CD4-positive, alpha-beta memory T cell (primary cell): ENCODE measurements at regions of chr22 and their contacts with region 1.

Region 1: DNA sequence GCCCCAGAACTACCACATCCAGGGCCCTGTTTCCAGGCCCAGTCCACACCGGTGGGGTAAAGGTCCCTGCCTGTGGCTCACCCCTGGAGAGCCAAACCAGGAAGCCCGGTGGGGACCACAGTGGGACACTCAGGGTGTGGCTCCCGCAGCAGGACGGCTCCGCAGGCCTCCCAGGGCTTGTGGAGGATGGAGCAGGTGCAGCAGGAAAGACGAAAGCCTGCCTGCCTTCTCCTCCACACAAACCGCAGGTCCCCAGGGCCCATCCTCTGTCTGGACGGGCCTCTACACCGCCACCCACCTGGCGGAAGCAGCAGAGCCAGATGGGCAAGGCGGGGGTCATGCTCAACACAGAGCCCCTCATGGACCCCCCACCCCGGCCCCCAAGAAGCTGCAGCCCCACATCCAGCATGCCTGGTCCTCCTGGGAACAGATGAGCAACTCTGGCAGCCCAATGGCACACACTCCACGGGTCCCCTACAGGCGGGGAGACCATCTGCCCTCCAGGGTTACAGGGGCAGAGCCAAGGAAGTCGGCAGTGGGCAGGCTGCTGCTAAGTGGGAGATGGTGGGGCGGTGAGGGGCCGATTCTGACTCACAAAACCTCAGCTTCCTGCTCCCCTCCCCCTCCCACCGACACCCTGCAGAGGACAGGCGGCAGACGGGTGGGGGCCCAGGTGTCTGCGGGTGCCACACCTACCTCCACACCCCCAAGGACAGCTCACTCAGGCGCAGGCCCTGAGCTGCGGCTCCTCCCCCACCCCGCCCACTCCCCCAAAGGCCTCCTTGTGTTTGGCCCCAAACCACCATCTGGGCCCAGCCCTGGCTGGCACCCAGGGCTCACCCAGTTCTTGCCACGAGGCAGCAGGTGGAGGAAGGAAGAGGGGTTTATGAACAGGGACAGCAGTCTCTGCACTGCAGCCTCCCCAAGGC is 5.2 kb downstream of the SBF1 start:
- DNase-seq: peak; percentile 96 to 99 (median 97)
- H3K4me3 ChIP-seq: peak overlapping the region; percentile 42 to 51
- H3K4me3 Mint-ChIP-seq: peak overlapping the region; percentile 74 to 88 (median 84)
- H3K27ac ChIP-seq: peak overlapping the region; percentile 75
- H3K27ac Mint-ChIP-seq: peak overlapping the region; percentile 89 to 98 (median 96)
- H3K4me1 ChIP-seq: peaks cover 58% of the 10 kb centered on the region
- H3K4me1 Mint-ChIP-seq: peaks cover 35 to 69% (median 51%) of the 10 kb centered on the region in 4 donors
- H3K27me3 ChIP-seq: no peaks in the 10 kb centered on the region
- H3K27me3 Mint-ChIP-seq: no peaks in the 10 kb centered on the region

Region 2: DNA sequence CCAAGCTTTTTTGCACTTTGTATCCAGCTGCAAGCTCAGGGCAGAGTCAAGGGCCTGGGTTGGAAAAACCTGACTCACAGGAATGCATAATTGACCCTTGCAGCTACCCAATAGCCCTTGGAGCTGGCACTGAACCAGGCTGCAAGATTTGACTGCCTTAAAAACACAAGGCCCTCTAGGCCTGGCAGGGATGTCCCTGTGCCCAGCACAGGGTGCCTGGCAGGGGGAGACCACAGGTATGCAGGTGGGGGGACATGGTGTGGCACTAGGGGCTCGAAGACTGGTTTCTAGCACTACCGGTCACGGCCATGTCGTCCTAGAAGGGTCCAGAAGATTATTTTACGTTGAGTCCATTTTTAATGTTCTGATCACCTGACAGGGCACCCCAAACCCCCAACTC is 25.0 kb before region 1 on chr22:
- CTCF ChIA-PET with region 1: interaction called, 6 read pairs
- POLR2A ChIA-PET with region 1: interaction called, 17 read pairs
- intact Hi-C with region 1: no loop called
- DNase-seq: no peak
- H3K4me3 ChIP-seq: no peak overlapping the region
- H3K4me3 Mint-ChIP-seq: no peak overlapping the region
- H3K27ac ChIP-seq: no peak overlapping the region
- H3K27ac Mint-ChIP-seq: peak overlapping the region in 5 of 7 donors; percentile 46 to 85 (median 69)
- H3K4me1 ChIP-seq: peaks cover 16% of the 10 kb centered on the region
- H3K4me1 Mint-ChIP-seq: peaks cover 7 to 18% (median 9%) of the 10 kb centered on the region in 4 donors
- H3K27me3 ChIP-seq: no peaks in the 10 kb centered on the region
- H3K27me3 Mint-ChIP-seq: no peaks in the 10 kb centered on the region

Region 3: GRCh38 chr22:50456466-50457234 is 13.0 kb before region 1 on chr22:
- CTCF ChIA-PET with region 1: interaction called, 5 read pairs
- POLR2A ChIA-PET with region 1: interaction called, 38 read pairs
- intact Hi-C with region 1: loop called (anchors 2 kb)
- DNase-seq: no peak
- H3K4me3 ChIP-seq: no peak overlapping the region
- H3K4me3 Mint-ChIP-seq: no peak overlapping the region
- H3K27ac ChIP-seq: no peak overlapping the region
- H3K27ac Mint-ChIP-seq: peak overlapping the region in 1 of 7 donors; percentile 19
- H3K4me1 ChIP-seq: no peaks in the 10 kb centered on the region
- H3K4me1 Mint-ChIP-seq: peaks cover 0 to 6% (median 2%) of the 10 kb centered on the region in 4 donors
- H3K27me3 ChIP-seq: no peaks in the 10 kb centered on the region
- H3K27me3 Mint-ChIP-seq: no peaks in the 10 kb centered on the region

Region 4: DNA sequence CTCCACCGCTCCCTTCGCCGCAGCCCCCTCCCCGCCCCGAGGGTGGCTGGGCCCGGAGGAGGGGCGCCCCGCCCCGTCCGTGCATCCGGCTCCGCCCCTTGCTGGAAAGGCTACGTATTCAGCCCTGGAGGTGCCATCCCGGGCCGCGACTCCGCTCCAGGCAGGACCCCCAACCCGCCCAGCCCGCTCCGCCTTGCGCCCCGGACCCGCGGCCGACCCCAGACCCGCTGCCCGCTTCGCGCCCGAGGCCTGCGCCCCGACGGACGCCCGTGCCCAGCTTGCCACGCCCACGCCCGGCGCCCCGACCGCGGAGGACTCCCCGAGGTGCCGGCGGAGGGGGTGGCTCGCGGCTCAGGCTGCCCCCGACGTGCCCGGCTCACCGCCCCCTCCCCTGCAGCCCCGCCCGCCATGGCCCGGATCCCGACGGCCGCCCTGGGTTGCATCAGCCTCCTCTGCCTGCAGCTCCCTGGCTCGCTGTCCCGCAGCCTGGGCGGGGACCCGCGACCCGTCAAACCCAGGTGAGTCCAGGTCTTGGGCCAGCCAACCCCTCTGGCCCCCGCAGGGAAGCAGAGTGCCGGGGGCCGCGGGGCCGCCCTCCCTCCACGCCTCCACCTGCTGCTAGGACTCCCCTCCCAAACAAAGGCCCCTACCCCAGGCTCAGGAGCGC is 11.9 kb after region 1 on chr22 and contains the start of gene ADM2:
- CTCF ChIA-PET with region 1: interaction called, 3 read pairs
- POLR2A ChIA-PET with region 1: interaction called, 39 read pairs
- intact Hi-C with region 1: loop called (anchors 1 kb)
- DNase-seq: peak; percentile 57 to 72 (median 61)
- H3K4me3 ChIP-seq: peak within 1 kb of the TSS in 1 of 2 donors; percentile 35
- H3K4me3 Mint-ChIP-seq: peak within 1 kb of the TSS; percentile 68 to 80 (median 74)
- H3K27ac ChIP-seq: peak within 1 kb of the TSS; percentile 9
- H3K27ac Mint-ChIP-seq: peak within 1 kb of the TSS in 4 of 7 donors; percentile 53 to 82 (median 75)
- H3K4me1 ChIP-seq: peaks cover 11% of the 10 kb centered on the region
- H3K4me1 Mint-ChIP-seq: peaks cover 2 to 24% (median 12%) of the 10 kb centered on the region in 4 donors
- H3K27me3 ChIP-seq: no peaks in the 10 kb centered on the region
- H3K27me3 Mint-ChIP-seq: no peaks in the 10 kb centered on the region
- total RNA-seq, gene ADM2: 4.4 to 4.5 TPM

Region 5: GRCh38 chr22:50530877-50531545 is 61.4 kb after region 1 on chr22:
- CTCF ChIA-PET with region 1: interaction called, 29 read pairs
- POLR2A ChIA-PET with region 1: interaction called, 55 read pairs
- intact Hi-C with region 1: no loop called
- DNase-seq: peak; percentile 72 to 82 (median 77)
- H3K4me3 ChIP-seq: peak overlapping the region; percentile 76 to 94
- H3K4me3 Mint-ChIP-seq: peak overlapping the region; percentile 89 to 95 (median 92)
- H3K27ac ChIP-seq: peak overlapping the region; percentile 96
- H3K27ac Mint-ChIP-seq: peak overlapping the region; percentile 96 to 99 (median 97)
- H3K4me1 ChIP-seq: peaks cover 54% of the 10 kb centered on the region
- H3K4me1 Mint-ChIP-seq: peaks cover 15 to 54% (median 38%) of the 10 kb centered on the region in 4 donors
- H3K27me3 ChIP-seq: no peaks in the 10 kb centered on the region
- H3K27me3 Mint-ChIP-seq: no peaks in the 10 kb centered on the region

Region 6: GRCh38 chr22:50537765-50538164 is 68.1 kb after region 1 on chr22:
- CTCF ChIA-PET with region 1: interaction called, 3 read pairs
- POLR2A ChIA-PET with region 1: interaction called, 21 read pairs
- intact Hi-C with region 1: no loop called
- DNase-seq: no peak
- H3K4me3 ChIP-seq: no peak overlapping the region
- H3K4me3 Mint-ChIP-seq: peak overlapping the region in 6 of 8 donors; percentile 49 to 70 (median 60)
- H3K27ac ChIP-seq: peak overlapping the region; percentile 99
- H3K27ac Mint-ChIP-seq: peak overlapping the region; percentile 86 to 100 (median 96)
- H3K4me1 ChIP-seq: peaks cover 41% of the 10 kb centered on the region
- H3K4me1 Mint-ChIP-seq: peaks cover 25 to 61% (median 49%) of the 10 kb centered on the region in 4 donors
- H3K27me3 ChIP-seq: no peaks in the 10 kb centered on the region
- H3K27me3 Mint-ChIP-seq: no peaks in the 10 kb centered on the region

Region 7: GRCh38 chr22:50612528-50613221 is 143.0 kb after region 1 on chr22:
- CTCF ChIA-PET with region 1: no interaction called
- POLR2A ChIA-PET with region 1: no interaction called
- intact Hi-C with region 1: no loop called
- DNase-seq: no peak
- H3K4me3 ChIP-seq: no peak overlapping the region
- H3K4me3 Mint-ChIP-seq: no peak overlapping the region
- H3K27ac ChIP-seq: no peak overlapping the region
- H3K27ac Mint-ChIP-seq: no peak overlapping the region
- H3K4me1 ChIP-seq: no peaks in the 10 kb centered on the region
- H3K4me1 Mint-ChIP-seq: peaks cover 0 to 4% (median 3%) of the 10 kb centered on the region in 4 donors
- H3K27me3 ChIP-seq: no peaks in the 10 kb centered on the region
- H3K27me3 Mint-ChIP-seq: peaks cover 5 to 18% of the 10 kb centered on the region in 2 donors